CD4-positive, alpha-beta memory T cell (primary cell): ENCODE measurements at regions of chr9 and their contacts with region 1.

Region 1: GRCh38 chr9:89549031-89549644 is 51.2 kb upstream of the SEMA4D start:
- DNase-seq: peak; percentile 78 to 83 (median 79)
- H3K4me3 ChIP-seq: no peak overlapping the region
- H3K4me3 Mint-ChIP-seq: peak overlapping the region in 4 of 8 donors; percentile 7 to 52 (median 44)
- H3K27ac ChIP-seq: no peak overlapping the region
- H3K27ac Mint-ChIP-seq: peak overlapping the region in 4 of 7 donors; percentile 50 to 79 (median 60)
- H3K4me1 ChIP-seq: peaks cover 18% of the 10 kb centered on the region
- H3K4me1 Mint-ChIP-seq: peaks cover 7 to 20% (median 14%) of the 10 kb centered on the region in 4 donors
- H3K27me3 ChIP-seq: no peaks in the 10 kb centered on the region
- H3K27me3 Mint-ChIP-seq: peaks cover 0 to 1% of the 10 kb centered on the region in 2 donors

Region 2: DNA sequence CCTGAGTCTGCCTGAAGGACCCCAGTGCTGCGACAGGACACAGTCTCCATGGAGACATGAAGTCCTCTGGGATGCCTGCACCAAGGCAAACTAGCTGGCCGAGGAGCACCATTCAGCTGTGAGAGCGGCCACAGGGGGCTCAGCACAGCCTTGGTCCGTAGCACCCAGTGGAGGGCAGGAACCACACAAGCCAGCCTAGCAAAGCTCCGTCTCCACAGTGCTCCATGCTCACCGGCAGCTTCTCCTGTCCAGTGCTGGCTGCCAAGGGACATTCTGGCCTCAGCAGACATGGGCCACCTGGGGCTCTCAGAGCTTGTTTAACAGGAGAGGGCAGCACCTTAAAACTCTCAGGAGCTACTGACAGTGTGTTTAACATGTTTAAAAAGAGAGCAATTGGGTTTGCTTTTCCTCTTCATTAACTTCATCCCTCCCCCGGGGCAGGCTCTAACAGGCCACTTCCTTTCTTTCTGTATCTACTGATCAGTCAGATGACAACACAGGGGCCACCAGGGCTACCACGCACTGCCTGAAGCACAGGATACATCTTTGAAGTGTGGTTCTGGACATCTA is 173.9 kb before region 1 on chr9:
- CTCF ChIA-PET with region 1: interaction called, 31 read pairs
- POLR2A ChIA-PET with region 1: interaction called, 11 read pairs
- intact Hi-C with region 1: loop called (anchors 1 kb)
- DNase-seq: peak in 2 of 5 donors; percentile 31 to 41
- H3K4me3 ChIP-seq: no peak overlapping the region
- H3K4me3 Mint-ChIP-seq: peak overlapping the region in 1 of 8 donors; percentile 29
- H3K27ac ChIP-seq: peak overlapping the region; percentile 27
- H3K27ac Mint-ChIP-seq: peak overlapping the region; percentile 73 to 92 (median 82)
- H3K4me1 ChIP-seq: peaks cover 25% of the 10 kb centered on the region
- H3K4me1 Mint-ChIP-seq: peaks cover 21 to 48% (median 37%) of the 10 kb centered on the region in 4 donors
- H3K27me3 ChIP-seq: no peaks in the 10 kb centered on the region
- H3K27me3 Mint-ChIP-seq: no peaks in the 10 kb centered on the region

Region 3: GRCh38 chr9:89442981-89443814 is 105.9 kb before region 1 on chr9:
- CTCF ChIA-PET with region 1: interaction called, 166 read pairs
- POLR2A ChIA-PET with region 1: interaction called, 11 read pairs
- intact Hi-C with region 1: no loop called
- DNase-seq: no peak
- H3K4me3 ChIP-seq: no peak overlapping the region
- H3K4me3 Mint-ChIP-seq: peak overlapping the region in 2 of 8 donors; percentile 18 to 46
- H3K27ac ChIP-seq: peak overlapping the region; percentile 50
- H3K27ac Mint-ChIP-seq: peak overlapping the region; percentile 90 to 99 (median 99)
- H3K4me1 ChIP-seq: peaks cover 99% of the 10 kb centered on the region
- H3K4me1 Mint-ChIP-seq: peaks cover 68 to 94% (median 82%) of the 10 kb centered on the region in 4 donors
- H3K27me3 ChIP-seq: no peaks in the 10 kb centered on the region
- H3K27me3 Mint-ChIP-seq: no peaks in the 10 kb centered on the region

Region 4: GRCh38 chr9:89466451-89467277 is 82.5 kb before region 1 on chr9:
- CTCF ChIA-PET with region 1: interaction called, 27 read pairs
- POLR2A ChIA-PET with region 1: interaction called, 12 read pairs
- intact Hi-C with region 1: loop called (anchors 1 kb)
- DNase-seq: peak in 1 of 5 donors; percentile 73
- H3K4me3 ChIP-seq: peak overlapping the region; percentile 5 to 56
- H3K4me3 Mint-ChIP-seq: peak overlapping the region; percentile 78 to 93 (median 84)
- H3K27ac ChIP-seq: peak overlapping the region; percentile 73
- H3K27ac Mint-ChIP-seq: peak overlapping the region; percentile 92 to 100 (median 96)
- H3K4me1 ChIP-seq: peaks cover 100% of the 10 kb centered on the region
- H3K4me1 Mint-ChIP-seq: peaks cover 86 to 100% (median 94%) of the 10 kb centered on the region in 4 donors
- H3K27me3 ChIP-seq: no peaks in the 10 kb centered on the region
- H3K27me3 Mint-ChIP-seq: no peaks in the 10 kb centered on the region

Region 5: DNA sequence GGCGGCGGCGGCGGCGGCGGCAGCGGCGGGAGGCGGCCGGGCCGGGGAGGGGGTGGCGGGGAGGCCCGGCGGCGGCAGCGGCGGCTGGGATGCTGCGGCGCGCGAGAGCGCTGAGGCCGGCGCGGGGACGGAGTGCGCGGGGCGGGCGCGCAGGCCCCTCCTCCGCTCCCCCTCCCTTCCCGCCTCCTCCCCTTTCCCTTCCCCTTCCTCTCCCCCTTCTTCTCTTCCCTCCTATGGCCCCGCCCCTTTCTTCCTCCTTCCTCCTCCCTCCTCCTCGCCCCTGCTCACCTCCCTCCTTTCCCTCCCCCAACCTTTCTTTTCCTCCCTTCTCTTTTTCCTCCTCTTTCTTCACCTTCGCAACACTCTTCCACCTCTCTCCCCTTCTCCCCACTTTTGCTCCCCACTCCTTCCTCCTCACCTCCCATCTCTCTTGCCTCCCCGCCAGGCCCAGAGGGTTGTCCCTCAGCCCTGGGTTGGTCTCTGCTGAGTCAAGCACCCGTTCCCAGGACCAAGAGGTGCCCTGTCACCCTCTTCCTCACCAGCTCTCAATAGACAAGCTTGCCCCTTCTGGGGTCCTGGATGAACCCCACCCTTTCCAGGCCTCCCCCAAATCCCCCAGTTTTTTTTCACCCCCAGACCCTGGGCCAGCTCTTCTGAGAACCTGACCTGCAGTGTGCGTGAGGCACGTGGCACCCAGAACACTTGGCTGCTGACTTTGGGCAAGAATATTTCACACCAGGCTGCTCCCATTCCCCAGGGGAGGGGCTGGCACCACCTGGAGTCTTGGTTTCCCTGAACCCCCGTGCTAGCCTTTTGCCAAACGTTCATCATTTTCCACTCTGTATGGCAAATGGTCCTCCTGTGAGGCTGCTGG is 50.9 kb before region 1 on chr9 and contains the start of gene SEMA4D:
- CTCF ChIA-PET with region 1: interaction called, 32 read pairs
- POLR2A ChIA-PET with region 1: interaction called, 18 read pairs
- intact Hi-C with region 1: loop called (anchors 1 kb)
- DNase-seq: peak in 3 of 5 donors; percentile 28 to 68 (median 37)
- H3K4me3 ChIP-seq: peak within 1 kb of the TSS; percentile 89 to 98
- H3K4me3 Mint-ChIP-seq: peak within 1 kb of the TSS; percentile 94 to 100 (median 98)
- H3K27ac ChIP-seq: peak within 1 kb of the TSS; percentile 72
- H3K27ac Mint-ChIP-seq: peak within 1 kb of the TSS; percentile 94 to 98 (median 96)
- H3K4me1 ChIP-seq: peaks cover 86% of the 10 kb centered on the region
- H3K4me1 Mint-ChIP-seq: peaks cover 71 to 93% (median 81%) of the 10 kb centered on the region in 4 donors
- H3K27me3 ChIP-seq: no peaks in the 10 kb centered on the region
- H3K27me3 Mint-ChIP-seq: no peaks in the 10 kb centered on the region
- total RNA-seq, gene SEMA4D: 393 to 410 TPM

Region 6: GRCh38 chr9:89536145-89536574 is 13.0 kb before region 1 on chr9:
- CTCF ChIA-PET with region 1: interaction called, 62 read pairs
- POLR2A ChIA-PET with region 1: interaction called, 13 read pairs
- intact Hi-C with region 1: no loop called
- DNase-seq: peak; percentile 54 to 76 (median 71)
- H3K4me3 ChIP-seq: peak overlapping the region in 1 of 2 donors; percentile 34
- H3K4me3 Mint-ChIP-seq: peak overlapping the region; percentile 72 to 84 (median 80)
- H3K27ac ChIP-seq: peak overlapping the region; percentile 23
- H3K27ac Mint-ChIP-seq: peak overlapping the region; percentile 58 to 93 (median 89)
- H3K4me1 ChIP-seq: peaks cover 89% of the 10 kb centered on the region
- H3K4me1 Mint-ChIP-seq: peaks cover 62 to 93% (median 84%) of the 10 kb centered on the region in 4 donors
- H3K27me3 ChIP-seq: no peaks in the 10 kb centered on the region
- H3K27me3 Mint-ChIP-seq: no peaks in the 10 kb centered on the region